ENCODE measurements at regions of chr1 and their contacts with region 1.

Region 1: GRCh38 chr1:45359882-45360513 is 19.8 kb upstream of the MUTYH start:
- DNase-seq: peak; percentile 69 to 89
- H3K4me3 ChIP-seq: no peak overlapping the region
- H3K27ac ChIP-seq: peak overlapping the region; percentile 42 to 73 (median 70)
- H3K4me1 ChIP-seq: peaks cover 10 to 27% (median 16%) of the 10 kb centered on the region in 4 donors
- H3K27me3 ChIP-seq: no peaks in the 10 kb centered on the region
- CTCF ChIP-seq: peak in 5 of 7 experiments; percentile 19 to 73 (median 60)
- EP300 ChIP-seq: no peak
- POLR2A ChIP-seq: no peak

Region 2: DNA sequence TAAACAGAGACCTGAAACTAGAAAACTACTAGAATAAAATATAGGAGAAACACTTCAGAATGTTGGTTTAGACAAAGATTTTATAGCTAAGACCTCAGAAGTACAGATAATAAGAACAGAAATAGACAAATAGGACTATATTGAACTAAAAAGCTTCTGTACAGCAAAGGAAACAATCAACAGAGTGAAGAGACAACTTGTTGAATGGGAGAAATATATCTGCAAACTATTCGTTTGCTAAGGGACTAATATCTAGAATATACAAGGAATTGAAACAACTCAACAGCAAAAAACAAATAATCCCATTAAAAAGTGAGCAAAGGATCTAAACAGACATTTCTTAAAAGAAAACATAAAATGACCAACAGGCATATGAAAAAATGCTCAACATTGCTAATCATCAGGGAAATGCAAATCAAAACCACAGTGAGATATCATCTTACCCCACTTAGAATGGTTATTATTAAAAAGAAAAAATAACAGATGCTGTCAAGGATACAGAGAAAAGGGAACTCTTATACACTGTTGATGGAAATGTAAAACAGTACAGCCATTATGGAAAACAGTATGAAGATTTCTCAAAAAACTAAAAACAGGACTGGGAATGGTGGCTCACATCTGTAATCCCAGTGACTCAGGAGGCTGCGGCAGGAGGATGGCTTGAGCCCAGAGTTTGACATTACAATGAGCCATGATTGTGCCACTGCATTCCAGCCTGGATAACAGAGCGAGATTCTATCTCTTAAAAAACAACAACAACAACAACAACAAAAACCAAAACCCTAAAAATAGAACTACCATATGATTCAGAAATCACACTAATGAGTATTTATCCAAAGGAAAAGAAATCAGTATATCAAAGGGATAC is 116.3 kb before region 1 on chr1:
- intact Hi-C with region 1: no loop called
- DNase-seq: no peak
- H3K4me3 ChIP-seq: no peak overlapping the region
- H3K27ac ChIP-seq: no peak overlapping the region
- H3K4me1 ChIP-seq: no peaks in the 10 kb centered on the region
- H3K27me3 ChIP-seq: no peaks in the 10 kb centered on the region
- CTCF ChIP-seq: no peak
- EP300 ChIP-seq: no peak
- POLR2A ChIP-seq: no peak

Region 3: DNA sequence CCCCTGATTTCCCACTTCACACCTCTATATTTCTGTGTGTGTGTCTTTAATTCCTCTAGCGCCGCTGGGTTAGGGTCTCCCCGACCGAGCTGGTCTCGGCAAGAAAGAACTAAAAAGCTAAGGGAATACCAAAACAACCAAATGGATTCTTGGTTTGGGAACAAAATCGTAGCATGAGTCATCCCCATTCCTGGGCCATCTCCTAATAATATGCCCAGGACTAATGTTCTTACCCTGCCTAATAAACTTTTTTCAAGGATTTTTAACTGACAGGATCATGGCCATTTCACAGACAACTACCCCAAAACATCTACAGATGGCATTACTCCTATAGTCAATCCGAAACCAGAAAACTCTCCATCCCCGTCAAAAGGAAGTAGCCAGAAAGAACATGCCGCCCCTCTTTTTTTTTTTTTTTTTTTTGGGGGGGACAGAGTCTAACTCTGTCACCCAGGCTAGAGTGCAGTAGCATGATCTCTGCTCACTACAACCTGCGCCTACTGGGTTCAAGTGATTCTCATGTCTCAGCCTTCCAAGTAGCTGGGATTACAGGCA is 37.4 kb before region 1 on chr1:
- intact Hi-C with region 1: no loop called
- DNase-seq: peak in 1 of 2 donors; percentile 4
- H3K4me3 ChIP-seq: no peak overlapping the region
- H3K27ac ChIP-seq: no peak overlapping the region
- H3K4me1 ChIP-seq: peaks cover 13 to 21% (median 14%) of the 10 kb centered on the region in 4 donors
- H3K27me3 ChIP-seq: peaks cover 0 to 5% (median 0%) of the 10 kb centered on the region in 3 donors
- CTCF ChIP-seq: no peak
- EP300 ChIP-seq: no peak
- POLR2A ChIP-seq: no peak

Region 4: GRCh38 chr1:45490626-45491486 is 130.9 kb after region 1 on chr1 and contains the start of gene TESK2:
- intact Hi-C with region 1: loop called (anchors 5 kb)
- DNase-seq: peak; percentile 98 to 100
- H3K4me3 ChIP-seq: peak within 1 kb of the TSS; percentile 76 to 95 (median 88)
- H3K27ac ChIP-seq: peak within 1 kb of the TSS; percentile 81 to 88 (median 83)
- H3K4me1 ChIP-seq: peaks cover 0 to 28% (median 13%) of the 10 kb centered on the region in 4 donors
- H3K27me3 ChIP-seq: no peaks in the 10 kb centered on the region
- CTCF ChIP-seq: peak in 3 of 7 experiments; percentile 3 to 51 (median 27)
- EP300 ChIP-seq: no peak
- POLR2A ChIP-seq: peak in 2 of 4 donors; percentile 60 to 65
- total RNA-seq, gene TESK2: 2.8 to 11.2 (median 7.4) TPM in 4 of 5 donors, not detected in the other

Region 5: GRCh38 chr1:45803301-45803780 is 443.3 kb after region 1 on chr1 and contains the start of gene MAST2:
- intact Hi-C with region 1: no loop called
- DNase-seq: peak; percentile 92 to 97
- H3K4me3 ChIP-seq: peak within 1 kb of the TSS; percentile 57 to 69 (median 68)
- H3K27ac ChIP-seq: peak within 1 kb of the TSS; percentile 81 to 92 (median 85)
- H3K4me1 ChIP-seq: peaks cover 11 to 31% (median 25%) of the 10 kb centered on the region in 4 donors
- H3K27me3 ChIP-seq: no peaks in the 10 kb centered on the region
- CTCF ChIP-seq: no peak
- EP300 ChIP-seq: no peak
- POLR2A ChIP-seq: no peak
- total RNA-seq, gene MAST2: 27.1 to 131 (median 46.7) TPM

Measured in stomach (tissue), 19 donors.